PC-3 (cell line): ENCODE measurements at regions of chr7 and their contacts with region 1.

Region 1: GRCh38 chr7:9711259-9711918 is 1262.3 kb upstream of the PHF14 start:
- DNase-seq: peak; percentile 50
- ATAC-seq: peak; percentile 68
- H3K4me3 ChIP-seq: 0 out of 2 replicates have a peak overlapping the region, but pooled peaks have one; percentile 15
- H3K27ac ChIP-seq: peak overlapping the region; percentile 76
- H3K4me1 ChIP-seq: peaks cover 23% of the 10 kb centered on the region
- H3K27me3 ChIP-seq: no peaks in the 10 kb centered on the region
- CTCF ChIP-seq: no peak

Region 2: GRCh38 chr7:9083829-9084228 is 627.6 kb before region 1 on chr7:
- CTCF ChIA-PET with region 1: no interaction called
- POLR2A ChIA-PET with region 1: no interaction called
- intact Hi-C with region 1: loop called (anchors 1 kb)
- DNase-seq: peak; percentile 48
- ATAC-seq: peak; percentile 99
- H3K4me3 ChIP-seq: no peak overlapping the region
- H3K27ac ChIP-seq: no peak overlapping the region
- H3K4me1 ChIP-seq: no peaks in the 10 kb centered on the region
- H3K27me3 ChIP-seq: no peaks in the 10 kb centered on the region
- CTCF ChIP-seq: no peak

Region 3: GRCh38 chr7:9557853-9558252 is 153.5 kb before region 1 on chr7:
- CTCF ChIA-PET with region 1: no interaction called
- POLR2A ChIA-PET with region 1: no interaction called
- intact Hi-C with region 1: loop called (anchors 2 kb)
- DNase-seq: no peak
- ATAC-seq: no peak
- H3K4me3 ChIP-seq: no peak overlapping the region
- H3K27ac ChIP-seq: no peak overlapping the region
- H3K4me1 ChIP-seq: no peaks in the 10 kb centered on the region
- H3K27me3 ChIP-seq: no peaks in the 10 kb centered on the region
- CTCF ChIP-seq: no peak

Region 4: GRCh38 chr7:9937944-9938631 is 226.7 kb after region 1 on chr7:
- CTCF ChIA-PET with region 1: no interaction called
- POLR2A ChIA-PET with region 1: no interaction called
- intact Hi-C with region 1: loop called (anchors 5 kb)
- DNase-seq: peak; percentile 36
- ATAC-seq: peak; percentile 98
- H3K4me3 ChIP-seq: peak overlapping the region; percentile 18; the same call in 1 of the 2 replicates
- H3K27ac ChIP-seq: no peak overlapping the region
- H3K4me1 ChIP-seq: no peaks in the 10 kb centered on the region; the same call in 1 of the 2 replicates
- H3K27me3 ChIP-seq: no peaks in the 10 kb centered on the region
- CTCF ChIP-seq: no peak